Activated CD4-positive, alpha-beta T cell treated with anti-CD3 and anti-CD28 coated beads, Interleukin-2, amount 10 ng/mL, durations not matched to agents 24 days and 14 days (primary cell): ENCODE measurements at regions of chrX and their contacts with region 1.

Region 1: DNA sequence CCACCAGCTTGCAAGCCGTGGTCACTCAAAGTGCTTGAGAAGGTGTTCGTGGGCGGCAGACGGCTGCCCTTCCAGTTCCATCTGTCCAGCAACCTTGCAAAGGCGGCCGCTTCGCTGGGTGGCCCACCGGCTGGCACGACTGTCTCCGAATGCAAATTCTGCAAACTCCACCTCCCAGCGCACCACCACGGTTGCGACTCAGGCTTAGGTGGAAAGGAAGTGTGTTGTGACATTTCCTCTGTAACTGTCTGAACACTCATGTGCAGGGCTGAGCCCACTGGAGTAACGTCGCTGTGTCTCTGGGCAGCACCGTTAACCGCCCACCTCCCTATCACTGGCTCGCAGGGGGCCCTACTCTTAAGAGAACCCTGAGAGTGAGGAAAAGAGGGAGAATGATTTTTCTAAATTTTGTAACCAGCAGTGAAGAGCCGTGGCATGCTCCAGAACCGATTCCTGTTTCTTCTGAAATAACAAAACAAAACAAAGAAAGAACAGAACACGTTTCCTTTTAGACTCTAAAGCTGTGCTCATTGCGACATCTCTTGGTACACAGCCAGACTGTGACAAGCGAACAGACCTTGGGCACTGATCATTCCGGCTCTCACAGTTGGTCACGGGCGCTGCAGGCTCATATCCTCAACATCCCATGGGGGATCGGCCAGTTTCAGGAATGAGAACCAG is at the start of gene P2RY8:
- DNase-seq: peak; percentile 93
- H3K4me3 Mint-ChIP-seq: peak within 1 kb of the TSS; percentile 88
- H3K27ac Mint-ChIP-seq: peak within 1 kb of the TSS; percentile 98
- H3K4me1 Mint-ChIP-seq: peaks cover 15% of the 10 kb centered on the region
- H3K27me3 Mint-ChIP-seq: no peaks in the 10 kb centered on the region
- total RNA-seq, gene P2RY8: 19.1 and 19.5 TPM in 2 replicates

Region 2: GRCh38 chrX:1246816-1247215 is 290.4 kb before region 1 on chrX:
- intact Hi-C with region 1: loop called (anchors 5 kb)
- DNase-seq: peak; percentile 96
- H3K4me3 Mint-ChIP-seq: peak overlapping the region; percentile 49
- H3K27ac Mint-ChIP-seq: peak overlapping the region; percentile 71
- H3K4me1 Mint-ChIP-seq: peaks cover 32% of the 10 kb centered on the region
- H3K27me3 Mint-ChIP-seq: no peaks in the 10 kb centered on the region

Region 3: DNA sequence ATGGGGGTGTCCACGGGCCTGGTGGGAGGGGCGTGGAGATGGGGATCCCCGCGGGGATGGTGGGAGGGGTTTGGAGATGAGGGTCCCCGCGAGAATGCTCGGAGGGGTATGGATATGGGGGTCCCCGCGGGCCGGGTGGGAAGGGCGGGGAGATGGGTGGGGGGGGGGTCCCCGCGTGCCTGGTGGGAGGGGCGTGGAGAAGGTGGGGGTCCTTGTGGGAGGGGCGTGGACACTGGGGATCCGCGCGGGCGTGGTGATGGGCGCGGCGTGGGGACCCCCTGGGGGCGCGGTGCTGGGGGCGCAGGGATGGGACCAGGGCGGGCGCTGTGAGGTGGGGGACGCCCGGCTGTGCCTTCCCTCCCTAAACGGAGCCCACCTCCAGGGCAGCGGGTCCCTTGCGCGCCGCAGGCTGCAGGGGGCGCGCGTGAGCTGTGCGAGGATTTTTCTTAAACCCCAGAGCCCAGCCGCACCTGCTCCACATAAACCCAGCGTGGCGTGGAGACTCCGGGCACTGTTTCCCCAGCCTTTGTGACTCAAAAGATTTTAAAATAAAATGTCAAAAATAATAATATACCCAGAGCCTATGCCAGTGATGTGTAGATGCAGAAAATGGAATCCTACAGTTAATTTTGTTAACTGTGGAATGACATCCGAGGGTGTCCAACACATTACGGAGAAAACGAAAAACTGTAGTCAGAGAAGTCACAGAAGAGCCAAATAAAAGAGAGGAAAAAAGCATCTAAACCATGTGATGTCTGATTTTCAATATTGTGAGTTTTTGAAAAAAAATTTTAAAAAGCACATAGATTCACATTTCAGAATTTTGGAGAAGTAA is 83.0 kb before region 1 on chrX:
- intact Hi-C with region 1: loop called (anchors 1 kb)
- DNase-seq: peak; percentile 97
- H3K4me3 Mint-ChIP-seq: peak overlapping the region; percentile 69
- H3K27ac Mint-ChIP-seq: peak overlapping the region; percentile 67
- H3K4me1 Mint-ChIP-seq: peaks cover 16% of the 10 kb centered on the region
- H3K27me3 Mint-ChIP-seq: no peaks in the 10 kb centered on the region

Region 4: GRCh38 chrX:1468250-1468772 is 68.9 kb before region 1 on chrX:
- intact Hi-C with region 1: loop called (anchors 1 kb)
- DNase-seq: peak; percentile 90
- H3K4me3 Mint-ChIP-seq: peak overlapping the region; percentile 83
- H3K27ac Mint-ChIP-seq: peak overlapping the region; percentile 92
- H3K4me1 Mint-ChIP-seq: peaks cover 70% of the 10 kb centered on the region
- H3K27me3 Mint-ChIP-seq: no peaks in the 10 kb centered on the region

Region 5: GRCh38 chrX:1521459-1521956 is 15.7 kb before region 1 on chrX:
- intact Hi-C with region 1: loop called (anchors 1 kb)
- DNase-seq: peak; percentile 91
- H3K4me3 Mint-ChIP-seq: peak overlapping the region; percentile 71
- H3K27ac Mint-ChIP-seq: peak overlapping the region; percentile 90
- H3K4me1 Mint-ChIP-seq: peaks cover 44% of the 10 kb centered on the region
- H3K27me3 Mint-ChIP-seq: no peaks in the 10 kb centered on the region

Region 6: DNA sequence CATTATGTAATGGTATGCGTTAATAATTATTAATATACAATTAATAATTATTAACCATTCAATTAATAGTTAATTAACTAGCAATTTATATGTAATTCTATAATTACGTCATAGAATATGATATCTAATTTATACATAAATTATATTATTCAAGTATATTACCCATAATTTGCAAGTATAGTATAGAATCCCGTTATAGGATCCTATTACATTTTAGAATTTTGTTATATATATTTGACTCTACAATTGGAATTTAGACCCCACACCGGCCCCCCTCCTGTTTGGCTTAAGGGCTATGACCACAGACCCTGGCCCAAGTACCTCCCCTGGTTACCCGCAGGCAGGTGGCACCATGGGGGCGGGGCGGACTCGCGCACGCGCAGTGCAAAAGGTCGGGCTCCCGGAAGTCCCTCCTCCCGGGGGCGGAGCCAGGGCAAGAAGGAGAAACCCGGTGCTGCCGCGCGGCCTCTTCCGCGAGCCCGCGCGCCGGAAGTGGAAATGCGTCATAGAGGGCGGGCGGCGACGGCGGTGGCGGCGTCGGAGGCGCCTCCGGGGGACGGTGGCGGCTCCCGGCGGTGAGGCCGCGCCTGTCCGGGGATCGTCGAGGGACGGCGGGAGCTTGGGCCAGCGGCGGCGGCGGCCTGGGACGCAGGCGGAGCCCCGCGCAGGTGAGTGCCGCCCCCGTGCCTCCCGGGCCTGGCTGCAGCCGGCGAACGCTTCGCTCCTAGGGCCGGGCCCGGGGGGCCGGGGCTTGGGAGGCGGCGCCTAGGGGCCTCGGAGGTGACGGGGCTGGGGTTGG is 54.1 kb after region 1 on chrX and contains the start of gene AKAP17A:
- intact Hi-C with region 1: loop called (anchors 1 kb)
- DNase-seq: peak; percentile 100
- H3K4me3 Mint-ChIP-seq: peak within 1 kb of the TSS; percentile 97
- H3K27ac Mint-ChIP-seq: peak within 1 kb of the TSS; percentile 93
- H3K4me1 Mint-ChIP-seq: peaks cover 22% of the 10 kb centered on the region
- H3K27me3 Mint-ChIP-seq: no peaks in the 10 kb centered on the region
- total RNA-seq, gene AKAP17A: 59.6 and 62.0 TPM in 2 replicates

Region 7: DNA sequence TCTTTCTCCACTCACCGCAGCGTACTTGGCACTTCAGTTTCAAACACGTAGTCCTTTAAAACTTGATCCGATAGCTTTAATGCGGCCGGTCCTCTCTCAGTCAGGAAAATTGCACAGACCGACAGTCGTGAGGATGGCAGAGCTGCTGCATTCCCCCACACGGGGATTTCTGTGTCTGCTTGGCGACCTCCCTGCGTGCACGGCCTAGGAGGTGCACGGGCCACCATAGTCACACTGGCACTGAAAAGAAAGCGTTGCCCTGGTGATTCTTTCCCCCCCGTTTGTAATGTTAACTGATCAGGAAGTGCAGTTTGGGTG is 64.6 kb after region 1 on chrX:
- intact Hi-C with region 1: no loop called
- DNase-seq: no peak
- H3K4me3 Mint-ChIP-seq: no peak overlapping the region
- H3K27ac Mint-ChIP-seq: no peak overlapping the region
- H3K4me1 Mint-ChIP-seq: peaks cover 2% of the 10 kb centered on the region
- H3K27me3 Mint-ChIP-seq: no peaks in the 10 kb centered on the region

Region 8: DNA sequence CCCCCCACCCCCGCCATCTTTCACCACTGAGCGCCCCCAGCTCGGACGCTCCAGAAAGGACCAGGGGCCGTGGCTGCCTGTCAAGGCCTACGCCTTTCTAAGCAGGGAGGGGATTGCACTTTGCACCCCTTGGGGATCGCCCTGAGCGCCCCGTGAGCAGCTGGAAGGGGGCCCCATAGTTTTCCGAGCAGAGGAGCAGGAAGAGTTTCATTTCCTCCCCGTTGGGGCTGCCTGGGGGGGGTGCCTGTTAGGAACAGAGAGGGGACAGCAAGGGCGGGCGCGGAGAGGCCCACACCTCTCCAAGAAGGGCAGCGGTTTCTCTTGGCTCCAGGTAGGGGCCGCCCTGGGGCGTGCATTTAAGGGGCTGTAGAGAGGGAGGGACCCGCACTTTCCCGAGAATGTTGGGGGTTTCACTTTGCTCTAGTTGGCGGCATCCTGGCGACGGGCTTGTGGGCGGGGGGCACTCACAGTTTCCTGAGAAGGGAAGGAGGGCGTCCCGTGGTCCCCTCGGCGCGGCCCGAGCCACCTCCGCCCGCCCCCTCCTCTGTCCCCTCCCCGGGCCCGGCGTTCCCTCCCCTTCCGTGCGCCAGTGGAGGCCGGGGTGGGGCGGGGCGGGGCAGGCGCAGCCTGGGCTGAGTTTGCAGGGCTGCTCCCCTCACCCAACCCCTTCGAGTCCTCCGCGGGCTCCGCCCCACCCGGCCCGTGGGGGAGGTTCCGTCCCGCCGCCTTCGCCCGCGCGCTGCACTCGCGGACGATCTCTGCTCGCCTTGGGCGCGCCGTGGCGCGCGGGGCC is 1071.7 kb after region 1 on chrX:
- intact Hi-C with region 1: loop called (anchors 5 kb)
- DNase-seq: peak; percentile 97
- H3K4me3 Mint-ChIP-seq: peak overlapping the region; percentile 95
- H3K27ac Mint-ChIP-seq: peak overlapping the region; percentile 93
- H3K4me1 Mint-ChIP-seq: peaks cover 46% of the 10 kb centered on the region
- H3K27me3 Mint-ChIP-seq: no peaks in the 10 kb centered on the region